Esophagus muscularis mucosa (tissue), 4 donors: ENCODE measurements at regions of chr6 and their contacts with region 1.

Region 1: GRCh38 chr6:22878324-22878701 is 308.9 kb downstream of the HDGFL1 start:
- DNase-seq: no peak
- H3K4me3 ChIP-seq: no peak overlapping the region
- H3K27ac ChIP-seq: peak overlapping the region in 3 of 4 donors; percentile 25 to 41 (median 41)
- H3K4me1 ChIP-seq: peaks cover 26 to 64% (median 45%) of the 10 kb centered on the region in 4 donors
- H3K27me3 ChIP-seq: no peaks in the 10 kb centered on the region
- CTCF ChIP-seq: no peak
- EP300 ChIP-seq: no peak
- POLR2A ChIP-seq: no peak

Region 2: DNA sequence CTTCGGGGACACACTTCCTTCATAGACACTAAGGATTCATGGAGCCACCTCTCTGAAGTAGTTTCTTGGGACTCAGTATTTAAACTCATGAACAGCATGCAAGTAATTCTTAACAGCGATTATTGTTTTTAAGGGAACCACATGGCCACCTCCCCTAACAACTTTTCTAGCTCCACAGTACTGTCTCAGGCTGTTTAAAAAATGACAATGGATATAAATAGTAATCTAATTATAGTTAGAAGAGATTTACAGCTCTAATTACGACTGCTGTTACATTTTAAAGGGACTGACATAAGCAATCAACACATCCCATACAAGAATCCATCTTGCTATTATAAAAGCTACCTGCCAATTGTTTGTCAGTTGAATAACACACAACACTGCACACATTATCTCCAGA is 381.0 kb before region 1 on chr6:
- intact Hi-C with region 1: no loop called
- DNase-seq: no peak
- H3K4me3 ChIP-seq: no peak overlapping the region
- H3K27ac ChIP-seq: no peak overlapping the region
- H3K4me1 ChIP-seq: peaks cover 0 to 6% (median 3%) of the 10 kb centered on the region in 4 donors
- H3K27me3 ChIP-seq: no peaks in the 10 kb centered on the region
- CTCF ChIP-seq: no peak
- EP300 ChIP-seq: no peak
- POLR2A ChIP-seq: no peak

Region 3: GRCh38 chr6:22598339-22598738 is 280.0 kb before region 1 on chr6:
- intact Hi-C with region 1: no loop called
- DNase-seq: no peak
- H3K4me3 ChIP-seq: no peak overlapping the region
- H3K27ac ChIP-seq: no peak overlapping the region
- H3K4me1 ChIP-seq: peaks cover 0 to 13% (median 0%) of the 10 kb centered on the region in 4 donors
- H3K27me3 ChIP-seq: no peaks in the 10 kb centered on the region
- CTCF ChIP-seq: no peak
- EP300 ChIP-seq: no peak
- POLR2A ChIP-seq: no peak

Region 4: GRCh38 chr6:22954749-22955385 is 76.6 kb after region 1 on chr6:
- intact Hi-C with region 1: loop called (anchors 5 kb)
- DNase-seq: no peak
- H3K4me3 ChIP-seq: peak overlapping the region; percentile 22 to 43 (median 32)
- H3K27ac ChIP-seq: peak overlapping the region; percentile 28 to 62 (median 49)
- H3K4me1 ChIP-seq: peaks cover 2 to 40% (median 32%) of the 10 kb centered on the region in 4 donors
- H3K27me3 ChIP-seq: no peaks in the 10 kb centered on the region
- CTCF ChIP-seq: no peak
- EP300 ChIP-seq: no peak
- POLR2A ChIP-seq: no peak